MCF 10A (cell line): ENCODE measurements at regions of chr18 and their contacts with region 1.

Region 1: DNA sequence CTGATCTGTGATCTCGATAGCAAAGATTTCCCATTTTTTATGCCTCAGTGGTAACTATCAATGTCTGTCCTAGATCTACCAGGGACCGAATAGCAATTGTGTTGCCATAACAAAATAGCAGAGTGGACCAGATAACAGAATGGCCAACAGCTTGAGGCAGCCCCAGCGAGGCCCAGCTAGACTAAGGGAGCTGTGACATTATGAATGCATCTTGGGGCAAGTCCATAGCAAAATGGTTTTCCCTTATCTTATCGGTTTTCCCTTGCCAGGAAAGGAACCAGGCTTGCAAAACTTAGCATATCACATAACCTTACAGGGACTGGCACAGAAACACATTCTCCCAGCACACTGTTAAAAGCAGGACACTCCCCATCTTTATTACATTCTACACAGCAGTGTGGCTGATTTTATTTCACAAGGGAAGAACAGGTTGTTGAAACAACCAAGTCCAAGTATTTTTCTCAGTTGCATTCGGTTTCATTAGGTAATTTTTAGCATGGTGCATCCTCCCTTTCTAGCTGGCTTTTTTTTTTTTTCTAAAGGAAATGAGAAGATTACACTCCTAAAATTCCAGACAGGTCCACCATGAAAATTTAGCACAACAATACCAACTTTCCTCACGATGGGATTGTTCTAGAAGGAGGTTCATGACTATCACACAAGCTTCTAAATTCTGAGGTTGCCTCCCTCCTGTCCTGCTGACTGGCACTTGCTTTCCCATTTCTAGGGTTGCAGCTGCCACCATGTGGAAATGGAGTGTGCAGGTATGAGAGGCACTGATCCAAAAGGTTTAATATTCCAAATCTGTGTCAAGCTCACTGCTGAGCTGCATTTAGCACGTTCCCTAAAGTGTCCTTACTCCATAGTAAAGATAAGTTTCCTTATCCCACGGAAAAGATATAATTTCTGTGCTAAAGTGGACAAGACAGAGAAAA is 97.0 kb upstream of the SLC35G4 start:
- DNase-seq: peak; percentile 68
- H3K4me3 Mint-ChIP-seq: no peak overlapping the region
- H3K27ac Mint-ChIP-seq: no peak overlapping the region
- H3K4me1 Mint-ChIP-seq: no peaks in the 10 kb centered on the region
- H3K27me3 Mint-ChIP-seq: peaks cover 17% of the 10 kb centered on the region
- CTCF ChIP-seq: peak; percentile 74

Region 2: GRCh38 chr18:11163665-11164064 is 348.7 kb before region 1 on chr18:
- CTCF ChIA-PET with region 1: interaction called, 3 read pairs
- POLR2A ChIA-PET with region 1: interaction called, 3 read pairs
- intact Hi-C with region 1: loop called (anchors 5 kb)
- DNase-seq: no peak
- H3K4me3 Mint-ChIP-seq: no peak overlapping the region
- H3K27ac Mint-ChIP-seq: no peak overlapping the region
- H3K4me1 Mint-ChIP-seq: no peaks in the 10 kb centered on the region
- H3K27me3 Mint-ChIP-seq: peaks cover 13% of the 10 kb centered on the region
- CTCF ChIP-seq: no peak

Region 3: GRCh38 chr18:11857177-11857887 is 345.0 kb after region 1 on chr18:
- CTCF ChIA-PET with region 1: no interaction called
- POLR2A ChIA-PET with region 1: no interaction called
- intact Hi-C with region 1: no loop called
- DNase-seq: peak; percentile 98
- H3K4me3 Mint-ChIP-seq: peak overlapping the region; percentile 67
- H3K27ac Mint-ChIP-seq: peak overlapping the region; percentile 98
- H3K4me1 Mint-ChIP-seq: peaks cover 44% of the 10 kb centered on the region
- H3K27me3 Mint-ChIP-seq: no peaks in the 10 kb centered on the region
- CTCF ChIP-seq: no peak